ENCODE measurements at regions of chr7 and their contacts with region 1.

Region 1: GRCh38 chr7:35906191-35906908 is 105.5 kb downstream of the SEPTIN7 start:
- DNase-seq: peak; percentile 65
- H3K4me3 ChIP-seq: no peak overlapping the region
- H3K27ac ChIP-seq: no peak overlapping the region
- H3K27me3 ChIP-seq: no peaks in the 10 kb centered on the region
- CTCF ChIP-seq: peak; percentile 95

Region 2: DNA sequence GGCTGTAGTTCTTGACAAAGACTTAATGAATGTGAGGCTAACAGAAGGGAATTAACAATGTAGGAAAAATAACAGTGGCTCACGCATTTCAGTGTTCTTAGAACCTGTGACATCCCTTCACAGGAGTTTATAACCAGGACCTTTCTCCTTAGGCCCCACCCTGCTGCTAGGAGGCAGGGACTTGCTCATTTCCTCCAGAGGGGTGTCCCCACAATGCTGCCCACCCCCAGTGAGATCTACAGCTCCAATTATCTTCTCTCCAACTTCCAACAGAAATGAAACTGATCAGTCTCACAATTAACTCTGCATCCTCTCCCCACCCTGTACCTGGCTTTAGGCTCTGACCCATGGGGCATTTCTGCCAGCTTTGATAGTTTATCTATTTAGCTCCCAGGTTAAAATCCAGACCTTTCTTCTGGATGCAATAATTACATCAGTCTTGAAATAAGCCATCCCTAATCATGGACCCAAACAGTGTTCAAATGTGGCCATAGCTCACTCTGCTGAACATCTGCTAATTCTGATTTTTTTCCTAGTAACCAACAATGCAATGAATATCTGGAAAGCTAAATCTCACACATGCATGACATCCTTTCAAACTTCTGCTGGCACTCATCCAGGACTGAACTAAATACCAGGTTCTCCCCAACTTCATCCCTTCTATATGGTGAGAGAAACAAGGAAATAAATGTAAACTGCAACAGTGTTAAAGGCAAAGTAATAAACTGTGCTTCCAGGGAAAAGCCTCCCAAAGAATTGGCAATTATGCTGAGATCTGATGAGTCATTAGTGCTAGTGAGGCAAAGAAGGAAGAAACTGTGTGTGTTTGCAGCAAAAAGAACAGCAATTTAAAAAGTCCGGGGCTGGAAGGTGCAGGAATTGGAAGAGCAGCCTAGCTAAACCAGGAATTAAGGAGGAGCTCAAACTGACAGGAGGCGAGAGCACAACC is 276.1 kb before region 1 on chr7:
- CTCF ChIA-PET with region 1: interaction called, 20 read pairs
- POLR2A ChIA-PET with region 1: no interaction called
- DNase-seq: no peak
- H3K4me3 ChIP-seq: no peak overlapping the region
- H3K27ac ChIP-seq: no peak overlapping the region
- H3K27me3 ChIP-seq: no peaks in the 10 kb centered on the region
- CTCF ChIP-seq: no peak

Region 3: GRCh38 chr7:35707422-35707821 is 198.9 kb before region 1 on chr7:
- CTCF ChIA-PET with region 1: interaction called, 137 read pairs
- POLR2A ChIA-PET with region 1: no interaction called
- DNase-seq: no peak
- H3K4me3 ChIP-seq: no peak overlapping the region
- H3K27ac ChIP-seq: no peak overlapping the region
- H3K27me3 ChIP-seq: no peaks in the 10 kb centered on the region
- CTCF ChIP-seq: no peak

Region 4: DNA sequence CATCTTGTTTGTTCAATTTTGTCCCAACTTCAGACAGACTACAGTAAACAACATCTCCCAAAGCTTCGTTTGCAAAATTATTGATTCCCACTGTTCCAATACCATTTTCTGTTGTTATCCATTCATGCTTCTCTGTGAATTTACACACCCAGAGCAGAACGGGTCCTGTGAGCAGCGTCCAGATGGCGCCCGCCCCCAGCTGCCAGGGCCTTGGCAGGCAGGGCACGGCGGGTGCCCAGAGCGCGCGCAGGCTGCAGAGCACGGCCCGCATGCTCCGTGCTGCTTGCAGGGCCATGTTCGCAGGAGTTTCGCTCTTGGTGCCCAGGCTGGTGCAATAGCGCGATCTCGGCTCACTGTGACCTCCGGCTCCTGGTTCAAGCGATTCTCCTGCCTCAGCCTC is 138.0 kb before region 1 on chr7:
- CTCF ChIA-PET with region 1: no interaction called
- POLR2A ChIA-PET with region 1: no interaction called
- DNase-seq: no peak
- H3K4me3 ChIP-seq: no peak overlapping the region
- H3K27ac ChIP-seq: no peak overlapping the region
- H3K27me3 ChIP-seq: no peaks in the 10 kb centered on the region
- CTCF ChIP-seq: no peak

Measured in AG04450 (cell line).